CD4-positive, alpha-beta memory T cell (primary cell): ENCODE measurements at regions of chr17 and their contacts with region 1.

Region 1: DNA sequence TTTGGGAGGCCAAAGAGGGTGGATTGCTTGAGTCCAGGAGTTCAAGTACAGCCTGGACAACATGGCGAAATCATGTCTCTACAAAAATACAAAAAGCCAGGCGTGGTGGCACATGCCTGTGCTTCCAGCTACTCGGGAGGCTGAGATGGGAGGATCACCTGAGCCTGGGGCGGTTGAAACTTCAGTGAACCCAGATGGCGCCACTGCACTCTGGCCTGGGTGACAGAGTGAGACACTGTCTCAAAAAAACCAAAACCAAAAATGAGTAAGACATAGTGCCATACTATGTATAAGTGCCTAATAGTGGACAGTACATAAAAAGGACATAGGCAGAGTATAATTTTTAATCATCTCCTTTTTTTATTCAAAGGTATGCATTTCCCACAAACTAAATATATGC is 4.0 kb downstream of the CTC1 start:
- DNase-seq: peak in 4 of 5 donors; percentile 27 to 56 (median 30)
- H3K4me3 ChIP-seq: no peak overlapping the region
- H3K4me3 Mint-ChIP-seq: peak overlapping the region; percentile 41 to 82 (median 62)
- H3K27ac ChIP-seq: no peak overlapping the region
- H3K27ac Mint-ChIP-seq: peak overlapping the region; percentile 67 to 100 (median 90)
- H3K4me1 ChIP-seq: peaks cover 52% of the 10 kb centered on the region
- H3K4me1 Mint-ChIP-seq: peaks cover 37 to 69% (median 46%) of the 10 kb centered on the region in 4 donors
- H3K27me3 ChIP-seq: no peaks in the 10 kb centered on the region
- H3K27me3 Mint-ChIP-seq: peaks cover 0 to 5% of the 10 kb centered on the region in 2 donors

Region 2: GRCh38 chr17:8294814-8295316 is 51.0 kb after region 1 on chr17:
- CTCF ChIA-PET with region 1: interaction called, 116 read pairs
- POLR2A ChIA-PET with region 1: interaction called, 100 read pairs
- intact Hi-C with region 1: loop called (anchors 1 kb)
- DNase-seq: no peak
- H3K4me3 ChIP-seq: peak overlapping the region; percentile 78 to 92
- H3K4me3 Mint-ChIP-seq: peak overlapping the region; percentile 91 to 97 (median 94)
- H3K27ac ChIP-seq: peak overlapping the region; percentile 73
- H3K27ac Mint-ChIP-seq: peak overlapping the region; percentile 92 to 98 (median 96)
- H3K4me1 ChIP-seq: peaks cover 26% of the 10 kb centered on the region
- H3K4me1 Mint-ChIP-seq: peaks cover 18 to 50% (median 29%) of the 10 kb centered on the region in 4 donors
- H3K27me3 ChIP-seq: no peaks in the 10 kb centered on the region
- H3K27me3 Mint-ChIP-seq: no peaks in the 10 kb centered on the region